PC-9 (cell line): ENCODE measurements at regions of chr3 and their contacts with region 1.

Region 1: DNA sequence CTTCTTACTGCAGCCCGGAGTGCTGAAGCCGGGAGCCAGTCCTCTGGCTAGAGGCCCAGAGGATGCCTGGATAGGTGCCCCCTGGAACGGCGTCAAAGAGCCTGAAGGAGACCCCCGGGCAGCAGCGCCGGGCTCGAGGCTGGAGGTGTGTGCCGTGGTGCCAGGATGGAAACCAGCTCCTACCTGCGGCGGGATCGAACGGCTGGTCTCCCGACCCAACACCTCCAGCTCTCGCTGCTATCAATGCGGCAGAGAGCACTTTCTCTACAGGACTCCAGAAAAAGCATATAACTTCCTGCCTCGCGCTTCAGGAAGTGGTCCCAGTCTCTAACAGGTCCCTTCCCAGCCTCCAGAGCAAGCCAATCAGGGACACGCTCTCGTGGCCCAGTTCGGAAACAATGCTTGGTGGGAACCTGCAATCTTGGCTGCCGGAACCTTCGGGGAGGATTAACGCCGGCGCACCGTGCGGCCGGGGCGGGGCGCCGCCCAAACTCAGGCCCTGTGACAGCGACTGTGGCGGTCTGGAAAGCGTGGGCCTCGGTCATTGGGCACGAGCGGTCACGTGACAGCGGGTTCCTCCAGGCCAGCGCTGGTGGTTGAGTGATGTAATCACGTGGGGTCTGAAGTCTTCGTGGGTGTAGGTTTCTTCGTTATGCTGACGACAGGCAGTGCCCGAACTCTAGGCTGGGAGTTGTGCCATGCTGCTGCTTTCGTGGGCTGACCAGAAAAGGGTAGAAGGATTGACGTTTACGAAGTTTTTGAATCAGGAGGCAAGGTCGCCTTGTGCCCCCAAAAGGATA is at the start of gene SLC33A1:
- DNase-seq: peak; percentile 99
- H3K4me3 ChIP-seq: peak within 1 kb of the TSS; percentile 84
- H3K27ac ChIP-seq: peak within 1 kb of the TSS; percentile 99
- H3K4me1 ChIP-seq: peaks cover 33% of the 10 kb centered on the region
- H3K27me3 ChIP-seq: no peaks in the 10 kb centered on the region
- CTCF ChIP-seq: no peak
- total RNA-seq, gene SLC33A1: 22.4 and 28.6 TPM in 2 replicates

Region 2: DNA sequence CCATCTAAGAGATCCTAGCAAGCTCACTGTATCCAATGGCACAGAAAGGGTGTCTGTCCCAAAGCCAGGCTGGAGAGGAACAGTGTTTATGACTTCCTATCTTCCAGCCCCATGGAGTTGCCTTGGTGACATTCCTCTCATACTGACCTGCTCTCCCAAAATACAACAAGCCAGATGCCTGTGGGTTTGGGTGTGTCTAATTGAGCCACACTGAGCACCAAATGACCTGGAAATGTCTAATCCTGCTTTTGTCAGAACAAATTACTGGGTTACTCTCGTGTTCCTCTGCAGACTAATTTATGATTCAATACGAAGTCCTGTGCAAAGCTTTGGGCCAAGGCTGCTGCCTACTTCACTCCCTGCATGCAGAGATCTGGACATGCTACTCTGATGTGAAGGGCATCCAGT is 462.8 kb before region 1 on chr3:
- CTCF ChIA-PET with region 1: no interaction called
- POLR2A ChIA-PET with region 1: no interaction called
- intact Hi-C with region 1: loop called (anchors 10 kb)
- DNase-seq: peak; percentile 75 to 94
- H3K4me3 ChIP-seq: no peak overlapping the region
- H3K27ac ChIP-seq: 0 out of 2 replicates have a peak overlapping the region, but pooled peaks have one; percentile 3
- H3K4me1 ChIP-seq: peaks cover 25% of the 10 kb centered on the region
- H3K27me3 ChIP-seq: no peaks in the 10 kb centered on the region
- CTCF ChIP-seq: no peak

Region 3: GRCh38 chr3:155805802-155806618 is 48.3 kb before region 1 on chr3 and contains the start of gene C3orf33:
- CTCF ChIA-PET with region 1: interaction called, 9 read pairs
- POLR2A ChIA-PET with region 1: no interaction called
- intact Hi-C with region 1: loop called (anchors 2 kb)
- DNase-seq: peak; percentile 64 to 79
- H3K4me3 ChIP-seq: peak within 1 kb of the TSS; percentile 91
- H3K27ac ChIP-seq: no peak within 1 kb of the TSS
- H3K4me1 ChIP-seq: peaks cover 5% of the 10 kb centered on the region; the same call in 1 of the 2 replicates
- H3K27me3 ChIP-seq: no peaks in the 10 kb centered on the region
- CTCF ChIP-seq: peak; percentile 92
- total RNA-seq, gene C3orf33: 1.1 and 2.3 TPM in 2 replicates

Region 4: GRCh38 chr3:155870133-155870944 is 16.0 kb after region 1 on chr3 and contains the start of gene GMPS:
- CTCF ChIA-PET with region 1: no interaction called
- POLR2A ChIA-PET with region 1: interaction called, 5 read pairs
- intact Hi-C with region 1: loop called (anchors 1 kb)
- DNase-seq: peak; percentile 84 to 99
- H3K4me3 ChIP-seq: peak within 1 kb of the TSS; percentile 91
- H3K27ac ChIP-seq: peak within 1 kb of the TSS; percentile 79
- H3K4me1 ChIP-seq: peaks cover 21% of the 10 kb centered on the region
- H3K27me3 ChIP-seq: no peaks in the 10 kb centered on the region
- CTCF ChIP-seq: peak; percentile 58
- total RNA-seq, gene GMPS: 116 and 139 TPM in 2 replicates

Region 5: GRCh38 chr3:155978324-155978723 is 124.0 kb after region 1 on chr3:
- CTCF ChIA-PET with region 1: no interaction called
- POLR2A ChIA-PET with region 1: no interaction called
- intact Hi-C with region 1: no loop called
- DNase-seq: no peak
- H3K4me3 ChIP-seq: no peak overlapping the region
- H3K27ac ChIP-seq: no peak overlapping the region
- H3K4me1 ChIP-seq: no peaks in the 10 kb centered on the region
- H3K27me3 ChIP-seq: no peaks in the 10 kb centered on the region
- CTCF ChIP-seq: peak; percentile 44; the same call in 1 of the 2 replicates

Region 6: GRCh38 chr3:156150434-156151066 is 296.2 kb after region 1 on chr3:
- CTCF ChIA-PET with region 1: no interaction called
- POLR2A ChIA-PET with region 1: no interaction called
- intact Hi-C with region 1: no loop called
- DNase-seq: peak; percentile 39 to 60
- H3K4me3 ChIP-seq: no peak overlapping the region
- H3K27ac ChIP-seq: no peak overlapping the region
- H3K4me1 ChIP-seq: no peaks in the 10 kb centered on the region
- H3K27me3 ChIP-seq: no peaks in the 10 kb centered on the region
- CTCF ChIP-seq: peak; percentile 95

Region 7: DNA sequence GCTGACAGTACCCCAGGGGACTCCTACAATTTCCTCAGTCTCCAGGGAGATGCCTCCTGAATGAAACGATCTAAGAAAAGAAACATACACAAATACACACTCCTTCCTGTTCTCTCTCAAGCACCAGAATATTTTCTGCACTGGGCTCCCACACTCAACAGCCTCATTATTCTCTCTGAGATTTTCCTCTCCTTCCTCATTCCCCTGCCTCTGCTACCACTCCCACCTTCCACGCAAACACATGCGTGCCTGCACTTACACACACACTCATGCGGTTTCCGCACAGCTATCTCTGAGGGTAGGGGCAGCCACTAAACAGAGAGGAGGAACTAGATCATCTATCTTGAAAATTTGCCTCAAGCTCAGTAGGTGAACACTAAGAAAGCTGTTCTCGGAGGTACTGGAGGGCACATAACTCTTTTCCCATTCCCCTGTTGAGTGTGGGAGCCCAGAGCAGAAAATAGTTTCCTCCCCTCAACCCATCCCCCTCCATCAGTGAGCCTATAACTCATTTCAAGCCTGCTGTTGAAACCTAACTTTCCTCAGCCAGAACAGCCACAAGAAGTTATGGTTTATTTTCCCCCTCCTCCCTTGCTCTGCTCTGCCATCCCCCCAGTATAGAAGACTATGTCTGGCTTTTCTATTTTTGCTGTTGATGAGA is 789.5 kb after region 1 on chr3:
- CTCF ChIA-PET with region 1: no interaction called
- POLR2A ChIA-PET with region 1: no interaction called
- intact Hi-C with region 1: no loop called
- DNase-seq: no peak
- H3K4me3 ChIP-seq: no peak overlapping the region
- H3K27ac ChIP-seq: no peak overlapping the region
- H3K4me1 ChIP-seq: no peaks in the 10 kb centered on the region
- H3K27me3 ChIP-seq: no peaks in the 10 kb centered on the region
- CTCF ChIP-seq: no peak